Activated T-helper 2 cell treated with anti-CD3 and anti-CD28 coated beads, Interferon-gamma antibody, Interleukin-2, Interleukin-4, amounts not matched to agents 10 μg/mL and 5 μg/mL and 100 μg/mL, durations not matched to agents 14 hours and 24 hours and 36 hours (primary cell): ENCODE measurements at regions of chrX and their contacts with region 1.

Region 1: DNA sequence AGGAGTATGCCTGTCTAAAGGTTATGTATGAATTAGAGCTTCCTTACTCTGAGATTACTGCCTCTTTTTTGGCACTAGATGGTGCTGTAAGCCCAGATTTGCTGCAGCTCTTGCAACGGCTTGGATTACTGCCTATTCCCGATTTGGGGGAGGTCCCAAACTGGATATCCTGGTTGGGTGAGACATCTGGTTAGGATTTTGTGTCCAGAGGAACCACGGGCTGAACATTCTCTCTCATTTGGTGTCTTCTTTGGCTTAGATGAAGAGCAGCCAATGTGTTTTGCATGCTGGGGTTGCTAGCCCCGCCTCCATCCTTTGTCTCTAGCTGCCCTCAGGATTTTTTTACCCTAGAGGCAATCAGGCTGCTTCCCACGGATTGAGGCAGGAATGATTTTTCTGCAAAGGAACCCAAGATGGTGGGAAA is 31.9 kb downstream of the F8A1 start:
- DNase-seq: peak; percentile 9
- H3K4me3 Mint-ChIP-seq: peak overlapping the region; percentile 19
- H3K27ac Mint-ChIP-seq: no peak overlapping the region
- H3K4me1 Mint-ChIP-seq: peaks cover 4% of the 10 kb centered on the region
- H3K27me3 Mint-ChIP-seq: peaks cover 9% of the 10 kb centered on the region

Region 2: GRCh38 chrX:155056877-155057792 is 139.1 kb after region 1 on chrX:
- intact Hi-C with region 1: loop called (anchors 10 kb)
- DNase-seq: peak; percentile 32
- H3K4me3 Mint-ChIP-seq: peak overlapping the region; percentile 31
- H3K27ac Mint-ChIP-seq: peak overlapping the region; percentile 42
- H3K4me1 Mint-ChIP-seq: peaks cover 25% of the 10 kb centered on the region
- H3K27me3 Mint-ChIP-seq: no peaks in the 10 kb centered on the region

Region 3: GRCh38 chrX:155148724-155149537 is 230.9 kb after region 1 on chrX:
- intact Hi-C with region 1: loop called (anchors 10 kb)
- DNase-seq: peak; percentile 11
- H3K4me3 Mint-ChIP-seq: no peak overlapping the region
- H3K27ac Mint-ChIP-seq: no peak overlapping the region
- H3K4me1 Mint-ChIP-seq: peaks cover 5% of the 10 kb centered on the region
- H3K27me3 Mint-ChIP-seq: peaks cover 4% of the 10 kb centered on the region

Region 4: DNA sequence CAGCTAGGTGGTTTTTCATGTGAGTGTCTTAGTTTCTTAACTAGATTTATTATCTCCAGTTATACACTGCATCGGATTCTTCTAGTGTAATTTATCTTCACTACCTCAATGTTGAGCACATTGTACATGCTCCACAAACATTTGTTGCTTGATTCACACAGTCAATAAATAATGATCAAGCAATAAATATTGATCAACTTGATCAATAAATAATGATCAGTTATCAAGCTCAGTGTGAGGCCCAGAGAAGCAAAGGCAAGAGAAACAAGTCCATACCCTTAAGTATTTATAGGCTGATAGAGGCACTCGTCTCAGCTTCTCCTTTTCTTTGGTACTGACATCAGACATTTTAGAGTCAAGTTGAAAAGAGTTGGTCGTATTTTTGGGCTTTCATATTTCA is 293.1 kb after region 1 on chrX:
- intact Hi-C with region 1: no loop called
- DNase-seq: no peak
- H3K4me3 Mint-ChIP-seq: no peak overlapping the region
- H3K27ac Mint-ChIP-seq: no peak overlapping the region
- H3K4me1 Mint-ChIP-seq: peaks cover 4% of the 10 kb centered on the region
- H3K27me3 Mint-ChIP-seq: no peaks in the 10 kb centered on the region